ENCODE measurements at regions of chr1 and their contacts with region 1.

Region 1: GRCh38 chr1:58652651-58653184 is 47.1 kb downstream of the MYSM1 start:
- DNase-seq: peak; percentile 42
- ATAC-seq: peak; percentile 98
- H3K4me3 ChIP-seq: no peak overlapping the region
- H3K27ac ChIP-seq: no peak overlapping the region
- H3K4me1 ChIP-seq: no peaks in the 10 kb centered on the region
- H3K27me3 ChIP-seq: no peaks in the 10 kb centered on the region
- CTCF ChIP-seq: peak; percentile 67 to 94 (median 77)
- EP300 ChIP-seq: no peak
- POLR2A ChIP-seq: no peak
- RAD21 ChIP-seq: peak; percentile 98

Region 2: GRCh38 chr1:57719274-57719673 is 933.4 kb before region 1 on chr1:
- CTCF ChIA-PET with region 1: no interaction called
- POLR2A ChIA-PET with region 1: no interaction called
- RAD21 ChIA-PET with region 1: no interaction called
- SMC1A ChIA-PET with region 1: no interaction called
- in situ Hi-C with region 1: no loop called
- intact Hi-C with region 1: no loop called
- DNase-seq: no peak
- ATAC-seq: no peak
- H3K4me3 ChIP-seq: no peak overlapping the region
- H3K27ac ChIP-seq: no peak overlapping the region
- H3K4me1 ChIP-seq: no peaks in the 10 kb centered on the region
- H3K27me3 ChIP-seq: no peaks in the 10 kb centered on the region
- CTCF ChIP-seq: no peak
- EP300 ChIP-seq: no peak
- POLR2A ChIP-seq: no peak
- RAD21 ChIP-seq: no peak

Region 3: DNA sequence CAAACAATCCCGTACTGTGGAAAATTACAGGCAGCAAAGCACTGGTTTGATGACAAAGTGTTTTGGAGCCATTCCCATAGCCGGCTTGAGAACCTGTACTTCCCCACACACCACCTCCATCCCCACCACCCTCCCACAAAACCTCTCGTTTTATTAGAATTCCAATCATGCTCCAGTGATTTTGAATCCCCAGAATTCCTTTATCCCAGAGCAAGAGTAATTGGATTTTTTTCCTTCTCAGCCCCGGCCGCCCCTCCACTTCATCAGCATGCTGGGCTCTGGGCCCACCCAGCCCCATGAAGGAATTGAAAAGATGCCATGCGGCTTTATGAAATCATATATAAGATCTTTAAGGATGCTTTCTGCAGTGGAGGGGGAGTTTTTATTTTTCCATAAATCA is 242.8 kb before region 1 on chr1:
- CTCF ChIA-PET with region 1: no interaction called
- POLR2A ChIA-PET with region 1: no interaction called
- RAD21 ChIA-PET with region 1: no interaction called
- SMC1A ChIA-PET with region 1: no interaction called
- in situ Hi-C with region 1: no loop called
- intact Hi-C with region 1: loop called (anchors 10 kb)
- DNase-seq: no peak
- ATAC-seq: no peak
- H3K4me3 ChIP-seq: no peak overlapping the region
- H3K27ac ChIP-seq: no peak overlapping the region
- H3K4me1 ChIP-seq: no peaks in the 10 kb centered on the region
- H3K27me3 ChIP-seq: no peaks in the 10 kb centered on the region
- CTCF ChIP-seq: no peak
- EP300 ChIP-seq: no peak
- POLR2A ChIP-seq: no peak
- RAD21 ChIP-seq: no peak

Region 4: DNA sequence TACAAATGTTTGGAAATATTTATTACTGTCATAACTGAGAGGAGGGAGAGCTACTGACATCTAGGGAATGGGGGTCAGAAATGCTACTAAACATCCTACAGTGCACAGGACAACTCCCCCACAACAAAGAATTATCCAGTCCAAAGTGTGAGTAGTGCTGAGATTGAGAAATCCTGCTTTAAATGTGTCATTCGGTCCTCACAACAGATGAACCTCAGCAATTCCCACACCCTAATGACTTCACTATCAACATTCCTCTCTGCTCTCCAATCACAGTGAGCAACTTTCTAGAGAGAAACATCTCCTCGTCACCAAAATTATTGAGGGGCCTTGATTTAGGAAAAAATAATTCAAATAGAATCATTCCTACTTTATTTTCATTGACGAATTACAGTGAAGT is 124.2 kb before region 1 on chr1:
- CTCF ChIA-PET with region 1: interaction called, 19 read pairs
- POLR2A ChIA-PET with region 1: no interaction called
- RAD21 ChIA-PET with region 1: interaction called, 3 read pairs
- SMC1A ChIA-PET with region 1: interaction called, 12 read pairs
- in situ Hi-C with region 1: no loop called
- intact Hi-C with region 1: no loop called
- DNase-seq: no peak
- ATAC-seq: no peak
- H3K4me3 ChIP-seq: no peak overlapping the region
- H3K27ac ChIP-seq: no peak overlapping the region
- H3K4me1 ChIP-seq: no peaks in the 10 kb centered on the region
- H3K27me3 ChIP-seq: no peaks in the 10 kb centered on the region
- CTCF ChIP-seq: no peak
- EP300 ChIP-seq: no peak
- POLR2A ChIP-seq: no peak
- RAD21 ChIP-seq: no peak

Region 5: DNA sequence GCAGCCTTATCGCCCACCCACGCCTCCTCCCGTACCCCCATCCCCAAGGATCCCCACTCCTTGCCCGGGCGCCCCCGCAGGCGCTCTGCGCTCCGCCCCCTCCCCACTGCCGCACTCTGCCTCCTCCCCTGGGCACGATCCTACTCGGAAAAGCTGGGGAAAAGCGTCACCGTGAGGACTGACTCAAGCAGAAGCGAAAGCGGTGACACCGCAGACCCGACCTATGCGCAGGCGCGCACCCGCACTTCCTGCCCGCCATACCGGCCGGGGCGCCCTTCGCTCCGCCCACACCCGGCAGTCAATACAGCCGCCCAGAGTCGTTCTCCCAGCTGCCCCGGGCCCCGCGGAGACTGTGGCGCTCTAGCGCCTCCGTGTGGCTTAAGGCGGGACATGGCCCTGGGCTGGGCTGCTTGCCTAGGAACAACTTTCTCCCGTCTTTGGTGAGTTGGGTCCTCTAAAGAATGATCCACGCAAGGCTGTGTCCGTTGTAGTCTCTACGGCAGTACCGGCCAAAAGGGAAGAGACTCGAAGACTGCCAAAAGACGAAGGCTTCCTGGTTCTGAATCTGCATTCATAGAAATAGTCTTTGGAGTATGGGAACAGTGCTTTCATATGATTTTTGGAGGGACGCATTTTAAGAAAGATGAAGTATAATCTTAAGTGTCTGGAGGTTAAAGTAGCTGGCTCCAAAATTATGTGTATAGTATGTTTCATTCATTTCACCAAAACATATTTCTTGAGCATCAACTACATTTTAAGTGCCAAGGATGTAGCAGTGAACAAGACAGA is 106.0 kb before region 1 on chr1 and contains the start of gene OMA1:
- CTCF ChIA-PET with region 1: interaction called, 58 read pairs
- POLR2A ChIA-PET with region 1: no interaction called
- RAD21 ChIA-PET with region 1: interaction called, 10 read pairs
- SMC1A ChIA-PET with region 1: interaction called, 15 read pairs
- in situ Hi-C with region 1: no loop called
- intact Hi-C with region 1: loop called (anchors 1 kb)
- DNase-seq: peak; percentile 83
- ATAC-seq: peak; percentile 97
- H3K4me3 ChIP-seq: peak within 1 kb of the TSS; percentile 93
- H3K27ac ChIP-seq: peak within 1 kb of the TSS; percentile 67
- H3K4me1 ChIP-seq: no peaks in the 10 kb centered on the region
- H3K27me3 ChIP-seq: no peaks in the 10 kb centered on the region
- CTCF ChIP-seq: peak; percentile 98 to 99 (median 98); a peak in 5 of 6 replicates
- EP300 ChIP-seq: no peak
- POLR2A ChIP-seq: peak; percentile 98
- RAD21 ChIP-seq: peak; percentile 94
- polyA plus RNA-seq, gene OMA1: 48.3 to 53.4 TPM

Region 6: DNA sequence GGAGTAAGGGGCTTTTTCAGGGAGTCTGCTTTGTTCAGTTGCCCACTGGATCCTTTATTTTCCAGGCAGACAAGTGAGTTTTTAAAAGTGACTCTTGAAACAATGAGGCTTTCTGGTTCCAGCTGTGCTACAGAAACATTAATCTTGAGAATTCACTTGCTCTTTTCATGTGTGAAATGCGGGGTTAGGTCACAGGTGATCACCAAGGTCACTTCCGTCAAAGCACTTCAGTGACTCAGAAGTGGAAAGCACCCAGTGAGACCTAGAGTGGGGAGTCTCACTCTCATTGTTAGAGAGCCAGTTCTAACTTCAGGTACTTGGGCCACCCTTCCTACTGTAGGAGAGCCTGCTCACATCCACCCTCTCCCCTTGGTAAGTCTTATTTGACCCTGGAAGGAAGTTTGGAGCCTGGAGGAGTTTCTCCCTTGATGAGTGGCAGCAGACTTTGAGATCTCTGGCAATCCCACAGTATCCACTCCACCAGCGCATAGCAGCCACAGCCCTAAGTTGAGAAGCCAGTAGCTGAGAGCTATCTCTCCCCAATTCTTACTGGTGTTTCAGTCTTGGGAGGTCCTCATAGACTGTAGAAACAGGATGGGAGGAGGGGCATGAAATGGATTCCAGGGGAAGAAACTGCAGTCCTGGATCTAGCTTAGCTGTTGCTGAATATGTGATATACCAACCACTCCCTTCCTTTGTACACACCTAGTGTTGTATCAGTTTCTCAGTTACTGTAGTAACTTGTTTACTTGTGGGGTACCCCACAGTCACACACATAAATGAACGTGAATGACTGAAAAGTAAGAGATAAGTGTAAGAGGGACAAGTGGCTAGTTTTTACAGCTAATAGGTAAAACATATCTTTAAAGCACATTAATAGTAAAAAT is 78.8 kb before region 1 on chr1:
- CTCF ChIA-PET with region 1: interaction called, 21 read pairs
- POLR2A ChIA-PET with region 1: no interaction called
- RAD21 ChIA-PET with region 1: interaction called, 8 read pairs
- SMC1A ChIA-PET with region 1: interaction called, 8 read pairs
- in situ Hi-C with region 1: no loop called
- intact Hi-C with region 1: loop called (anchors 1 kb)
- DNase-seq: peak; percentile 93
- ATAC-seq: peak; percentile 95
- H3K4me3 ChIP-seq: 0 out of 2 replicates have a peak overlapping the region, but pooled peaks have one; percentile 6
- H3K27ac ChIP-seq: peak overlapping the region; percentile 72
- H3K4me1 ChIP-seq: peaks cover 44% of the 10 kb centered on the region
- H3K27me3 ChIP-seq: no peaks in the 10 kb centered on the region
- CTCF ChIP-seq: no peak
- EP300 ChIP-seq: peak; percentile 95 to 98
- POLR2A ChIP-seq: peak; percentile 70
- RAD21 ChIP-seq: peak; percentile 20; the same call in 1 of the 2 replicates

Region 7: DNA sequence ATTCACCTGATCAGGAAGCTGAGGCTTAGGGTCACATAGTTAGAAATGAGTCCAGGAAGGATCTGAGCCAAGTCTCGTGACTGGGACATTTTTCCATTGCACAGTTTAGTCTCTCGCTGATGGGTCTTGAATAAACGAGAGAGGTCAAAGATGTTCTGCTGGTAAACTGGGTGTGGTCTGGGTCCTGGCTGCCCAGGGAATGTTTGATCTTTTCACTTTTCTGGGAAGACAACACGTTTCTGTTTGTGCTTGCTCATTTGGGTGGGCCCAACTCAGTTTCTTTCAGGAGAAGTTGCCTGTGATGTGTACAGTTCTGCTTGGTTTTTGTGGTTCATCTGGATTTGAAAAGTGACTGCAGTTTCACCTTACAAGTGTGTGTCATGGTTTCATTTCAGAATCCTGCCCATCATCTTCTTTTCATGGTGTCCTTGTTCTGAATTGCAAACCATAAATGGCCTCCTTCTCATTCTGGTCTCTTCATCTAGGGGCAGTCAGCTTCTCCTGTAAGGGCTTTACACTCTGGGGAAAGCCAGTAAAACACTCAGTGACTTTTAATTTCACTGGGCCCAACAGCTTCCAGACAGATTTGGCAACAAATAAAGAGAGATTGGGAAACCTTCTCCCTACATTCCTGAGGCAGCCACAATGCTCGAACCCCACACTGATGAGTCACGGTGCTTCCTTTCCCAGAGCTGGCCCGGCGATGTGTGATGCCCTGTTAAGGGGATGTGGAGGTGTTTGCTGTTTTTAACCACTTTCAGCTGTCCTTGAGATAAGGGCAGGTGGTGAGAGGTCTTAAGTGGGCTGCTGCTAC is 68.4 kb before region 1 on chr1:
- CTCF ChIA-PET with region 1: interaction called, 13 read pairs
- POLR2A ChIA-PET with region 1: no interaction called
- RAD21 ChIA-PET with region 1: no interaction called
- SMC1A ChIA-PET with region 1: interaction called, 4 read pairs
- in situ Hi-C with region 1: no loop called
- intact Hi-C with region 1: no loop called
- DNase-seq: no peak
- ATAC-seq: peak; percentile 86
- H3K4me3 ChIP-seq: 0 out of 2 replicates have a peak overlapping the region, but pooled peaks have one; percentile 35
- H3K27ac ChIP-seq: peak overlapping the region; percentile 51
- H3K4me1 ChIP-seq: peaks cover 21% of the 10 kb centered on the region
- H3K27me3 ChIP-seq: no peaks in the 10 kb centered on the region
- CTCF ChIP-seq: no peak
- EP300 ChIP-seq: no peak
- POLR2A ChIP-seq: no peak
- RAD21 ChIP-seq: no peak

Region 8: DNA sequence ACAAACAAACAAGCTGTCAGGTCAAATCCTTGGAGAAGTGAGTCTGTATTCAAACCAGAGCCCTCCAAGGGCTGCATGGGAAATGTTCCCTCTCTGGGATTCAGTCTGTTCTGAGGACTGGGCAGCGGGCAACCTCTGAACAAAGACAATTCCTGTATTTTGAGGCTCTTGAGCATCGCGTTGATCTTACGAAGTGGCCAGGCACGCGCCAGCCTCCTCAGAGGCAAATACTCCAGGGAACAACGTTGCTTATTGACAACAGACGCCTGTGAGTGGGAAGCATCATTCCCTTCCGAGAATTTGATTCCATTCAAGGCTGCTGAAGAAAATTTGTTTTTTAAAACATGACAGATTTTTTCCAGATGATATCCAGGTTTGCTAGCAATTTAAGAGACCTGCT is 55.6 kb before region 1 on chr1:
- CTCF ChIA-PET with region 1: no interaction called
- POLR2A ChIA-PET with region 1: no interaction called
- RAD21 ChIA-PET with region 1: no interaction called
- SMC1A ChIA-PET with region 1: no interaction called
- in situ Hi-C with region 1: loop called (anchors 5 kb)
- intact Hi-C with region 1: no loop called
- DNase-seq: no peak
- ATAC-seq: no peak
- H3K4me3 ChIP-seq: no peak overlapping the region
- H3K27ac ChIP-seq: no peak overlapping the region
- H3K4me1 ChIP-seq: peaks cover 2% of the 10 kb centered on the region; the same call in 1 of the 2 replicates
- H3K27me3 ChIP-seq: no peaks in the 10 kb centered on the region
- CTCF ChIP-seq: no peak
- EP300 ChIP-seq: no peak
- POLR2A ChIP-seq: no peak
- RAD21 ChIP-seq: no peak

Region 9: GRCh38 chr1:58628987-58629598 is 23.6 kb before region 1 on chr1:
- CTCF ChIA-PET with region 1: no interaction called
- POLR2A ChIA-PET with region 1: no interaction called
- RAD21 ChIA-PET with region 1: no interaction called
- SMC1A ChIA-PET with region 1: no interaction called
- in situ Hi-C with region 1: no loop called
- intact Hi-C with region 1: no loop called
- DNase-seq: no peak
- ATAC-seq: no peak
- H3K4me3 ChIP-seq: no peak overlapping the region
- H3K27ac ChIP-seq: no peak overlapping the region
- H3K4me1 ChIP-seq: no peaks in the 10 kb centered on the region
- H3K27me3 ChIP-seq: no peaks in the 10 kb centered on the region
- CTCF ChIP-seq: no peak
- EP300 ChIP-seq: no peak
- POLR2A ChIP-seq: no peak
- RAD21 ChIP-seq: no peak

Region 10: DNA sequence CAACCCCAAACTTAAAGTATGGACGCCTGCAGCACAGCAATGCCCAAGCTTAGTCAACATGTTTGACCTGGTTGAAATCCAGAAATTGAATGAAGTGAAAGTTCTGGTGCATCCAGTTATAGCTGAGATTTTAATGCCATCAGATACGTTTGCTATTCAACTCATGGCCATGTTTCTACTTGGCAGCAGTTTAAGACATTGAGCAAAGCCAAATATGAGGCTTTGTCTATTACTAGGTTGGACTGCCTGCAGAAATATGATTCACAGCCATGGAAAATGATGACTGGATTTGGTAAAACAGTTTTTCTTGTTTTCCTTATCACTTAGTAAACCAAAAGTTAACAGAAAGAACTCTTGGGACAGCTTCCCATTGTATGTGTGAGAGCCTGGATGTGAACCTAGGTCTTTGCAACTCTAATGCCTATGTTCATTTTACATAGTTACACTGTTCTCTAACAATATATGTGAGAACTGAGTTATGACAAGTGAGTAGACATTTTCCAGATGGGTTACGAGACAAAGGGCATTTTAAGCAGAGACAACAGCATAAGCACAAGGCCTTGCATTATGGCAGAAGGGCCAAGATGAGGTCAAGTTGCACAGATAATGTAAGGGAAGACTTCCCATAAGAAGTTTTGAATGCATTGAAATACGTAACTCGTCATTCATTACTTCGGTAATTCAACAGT is 79.5 kb after region 1 on chr1:
- CTCF ChIA-PET with region 1: no interaction called
- POLR2A ChIA-PET with region 1: no interaction called
- RAD21 ChIA-PET with region 1: no interaction called
- SMC1A ChIA-PET with region 1: no interaction called
- in situ Hi-C with region 1: no loop called
- intact Hi-C with region 1: no loop called
- DNase-seq: no peak
- ATAC-seq: no peak
- H3K4me3 ChIP-seq: no peak overlapping the region
- H3K27ac ChIP-seq: no peak overlapping the region
- H3K4me1 ChIP-seq: no peaks in the 10 kb centered on the region
- H3K27me3 ChIP-seq: no peaks in the 10 kb centered on the region
- CTCF ChIP-seq: no peak
- EP300 ChIP-seq: no peak
- POLR2A ChIP-seq: no peak
- RAD21 ChIP-seq: no peak